CD8-positive, alpha-beta T cell (primary cell): ENCODE measurements at regions of chr18 and their contacts with region 1.

Region 1: GRCh38 chr18:76518123-76518859 is 23.2 kb upstream of the ZNF516 start:
- DNase-seq: peak in 1 of 9 experiments; percentile 16
- ATAC-seq: no peak
- H3K4me3 ChIP-seq: peak overlapping the region in 1 of 2 experiments; percentile 0
- H3K4me3 Mint-ChIP-seq: peak overlapping the region; percentile 73
- H3K27ac ChIP-seq: no peak overlapping the region
- H3K27ac Mint-ChIP-seq: no peak overlapping the region
- H3K4me1 ChIP-seq: peaks cover 11% of the 10 kb centered on the region
- H3K4me1 Mint-ChIP-seq: peaks cover 10% of the 10 kb centered on the region
- H3K27me3 ChIP-seq: peaks cover 0 to 5% of the 10 kb centered on the region in 2 experiments
- H3K27me3 Mint-ChIP-seq: peaks cover 36% of the 10 kb centered on the region
- CTCF ChIP-seq: no peak

Region 2: GRCh38 chr18:76565238-76566180 is 47.2 kb after region 1 on chr18:
- CTCF ChIA-PET with region 1: no interaction called
- POLR2A ChIA-PET with region 1: no interaction called
- intact Hi-C with region 1: loop called in 1 of 2 experiments (anchors 2 kb)
- DNase-seq: peak in 1 of 9 experiments; percentile 20
- ATAC-seq: no peak
- H3K4me3 ChIP-seq: no peak overlapping the region
- H3K4me3 Mint-ChIP-seq: no peak overlapping the region
- H3K27ac ChIP-seq: no peak overlapping the region
- H3K27ac Mint-ChIP-seq: no peak overlapping the region
- H3K4me1 ChIP-seq: no peaks in the 10 kb centered on the region
- H3K4me1 Mint-ChIP-seq: peaks cover 6% of the 10 kb centered on the region
- H3K27me3 ChIP-seq: no peaks in the 10 kb centered on the region
- H3K27me3 Mint-ChIP-seq: peaks cover 21% of the 10 kb centered on the region
- CTCF ChIP-seq: no peak